ENCODE measurements at regions of chr6 and their contacts with region 1.

Region 1: DNA sequence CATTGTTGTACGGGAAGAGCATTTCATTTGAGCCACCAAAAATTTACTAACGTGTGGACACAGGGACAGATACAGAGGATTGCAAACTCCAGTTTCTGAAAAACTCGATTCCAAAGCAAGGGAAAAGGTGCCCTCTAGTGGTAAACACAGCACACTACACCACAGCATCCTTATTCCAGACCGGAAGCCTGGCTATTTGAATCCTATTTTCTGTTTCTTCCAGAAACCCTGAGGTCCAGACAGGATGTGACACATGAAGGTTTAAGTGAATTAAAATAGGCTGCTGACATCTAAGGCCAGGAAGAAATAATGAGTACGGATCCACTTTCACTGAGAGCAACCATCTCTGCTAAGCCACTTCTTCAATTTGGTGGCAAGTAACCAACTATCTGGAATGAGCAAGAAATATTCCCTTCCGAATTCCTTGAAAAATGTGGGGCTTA is 31.8 kb upstream of the GMPR start:
- DNase-seq: no peak
- ATAC-seq: peak; percentile 57
- H3K4me3 ChIP-seq: no peak overlapping the region
- H3K27ac ChIP-seq: no peak overlapping the region
- H3K4me1 ChIP-seq: peaks cover 16% of the 10 kb centered on the region
- H3K27me3 ChIP-seq: peaks cover 0 to 3% of the 10 kb centered on the region in 2 experiments; a peak in 1 of 4 replicates
- CTCF ChIP-seq: peak; percentile 86 to 95 (median 93)
- EP300 ChIP-seq: no peak
- POLR2A ChIP-seq: no peak
- RAD21 ChIP-seq: peak; percentile 96

Region 2: DNA sequence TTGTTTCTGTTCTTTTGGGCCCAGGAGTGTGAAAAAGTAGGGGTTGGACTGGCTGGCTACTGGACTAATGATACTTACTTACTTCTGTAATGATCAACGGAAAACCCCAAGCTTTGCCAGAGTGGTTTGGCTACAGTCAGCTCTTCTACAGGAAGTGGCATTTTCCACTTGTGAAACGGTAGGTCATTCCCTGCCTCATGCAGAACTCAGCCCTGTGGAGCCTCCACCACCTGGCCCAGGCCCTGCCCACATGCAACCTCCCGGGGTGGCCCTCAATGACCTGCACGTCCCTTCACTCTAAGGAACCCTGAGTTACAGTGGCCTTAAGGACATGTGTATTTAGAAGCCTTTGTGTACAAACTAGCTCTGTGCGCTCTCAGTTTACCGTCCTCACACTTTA is 684.2 kb before region 1 on chr6:
- CTCF ChIA-PET with region 1: interaction called, 5 read pairs
- POLR2A ChIA-PET with region 1: no interaction called
- RAD21 ChIA-PET with region 1: interaction called, 4 read pairs
- SMC1A ChIA-PET with region 1: interaction called, 3 read pairs
- in situ Hi-C with region 1: no loop called
- intact Hi-C with region 1: loop called (anchors 5 kb)
- DNase-seq: no peak
- ATAC-seq: peak; percentile 64
- H3K4me3 ChIP-seq: no peak overlapping the region
- H3K27ac ChIP-seq: no peak overlapping the region
- H3K4me1 ChIP-seq: no peaks in the 10 kb centered on the region
- H3K27me3 ChIP-seq: no peaks in the 10 kb centered on the region
- CTCF ChIP-seq: no peak
- EP300 ChIP-seq: no peak
- POLR2A ChIP-seq: no peak
- RAD21 ChIP-seq: no peak

Region 3: DNA sequence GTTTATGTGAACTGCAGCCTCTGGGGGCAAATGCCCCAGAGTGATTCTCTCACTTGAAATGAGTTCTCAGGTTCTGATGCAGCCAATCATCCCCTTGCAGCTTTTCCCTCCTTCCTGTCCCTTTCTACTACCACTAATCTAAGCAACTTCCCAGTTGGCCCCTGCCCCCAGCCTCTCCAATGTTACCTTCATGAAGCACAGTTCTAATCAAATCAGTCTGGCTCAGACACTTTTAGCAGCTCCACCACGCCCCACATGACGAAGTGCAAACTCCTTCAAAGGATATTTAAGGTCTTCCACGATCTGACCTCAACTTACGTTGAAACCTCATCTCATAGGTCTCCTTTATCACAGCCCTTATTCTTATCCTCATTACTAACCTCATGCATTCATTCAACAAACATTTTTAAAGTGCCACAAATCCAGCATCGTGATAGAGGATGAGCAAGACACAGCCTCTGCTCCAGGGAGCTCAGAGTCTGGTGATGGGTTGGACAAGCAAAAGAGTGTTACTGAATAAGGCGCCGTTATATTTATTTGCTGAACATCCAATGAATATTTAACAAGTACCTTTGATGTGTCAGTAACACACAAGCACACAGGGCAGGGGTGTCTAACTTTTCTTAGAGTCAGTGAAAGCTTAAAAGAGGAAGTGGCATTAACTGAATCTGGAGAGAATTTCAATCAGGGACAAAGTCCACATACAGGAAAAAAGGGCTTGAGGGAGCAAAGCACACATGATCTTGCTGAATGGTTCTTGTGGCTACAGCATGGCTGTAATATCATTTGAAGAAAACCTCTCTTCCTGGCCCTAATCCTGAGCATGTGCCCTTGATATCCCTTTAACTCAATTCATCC is 523.4 kb before region 1 on chr6:
- CTCF ChIA-PET with region 1: interaction called, 13 read pairs
- POLR2A ChIA-PET with region 1: interaction called, 4 read pairs
- RAD21 ChIA-PET with region 1: interaction called, 10 read pairs
- SMC1A ChIA-PET with region 1: interaction called, 17 read pairs
- in situ Hi-C with region 1: no loop called
- intact Hi-C with region 1: no loop called
- DNase-seq: peak; percentile 40
- ATAC-seq: peak; percentile 93
- H3K4me3 ChIP-seq: no peak overlapping the region
- H3K27ac ChIP-seq: no peak overlapping the region
- H3K4me1 ChIP-seq: 0 out of 2 replicates have a peak, but pooled peaks cover 3% of the 10 kb centered on the region
- H3K27me3 ChIP-seq: 0 out of 4 replicates have a peak, but pooled peaks cover 0 to 3% of the 10 kb centered on the region in 2 experiments
- CTCF ChIP-seq: no peak
- EP300 ChIP-seq: peak; percentile 57 to 68; a peak in 3 of 4 replicates
- POLR2A ChIP-seq: no peak
- RAD21 ChIP-seq: no peak

Region 4: GRCh38 chr6:16168858-16169257 is 37.8 kb before region 1 on chr6:
- CTCF ChIA-PET with region 1: interaction called, 10 read pairs
- POLR2A ChIA-PET with region 1: interaction called, 4 read pairs
- RAD21 ChIA-PET with region 1: interaction called, 6 read pairs
- SMC1A ChIA-PET with region 1: interaction called, 15 read pairs
- in situ Hi-C with region 1: no loop called
- intact Hi-C with region 1: no loop called
- DNase-seq: peak; percentile 32
- ATAC-seq: peak; percentile 86
- H3K4me3 ChIP-seq: no peak overlapping the region
- H3K27ac ChIP-seq: no peak overlapping the region
- H3K4me1 ChIP-seq: peaks cover 13% of the 10 kb centered on the region
- H3K27me3 ChIP-seq: no peaks in the 10 kb centered on the region
- CTCF ChIP-seq: peak; percentile 56 to 66 (median 65)
- EP300 ChIP-seq: no peak
- POLR2A ChIP-seq: no peak
- RAD21 ChIP-seq: peak; percentile 87

Region 5: DNA sequence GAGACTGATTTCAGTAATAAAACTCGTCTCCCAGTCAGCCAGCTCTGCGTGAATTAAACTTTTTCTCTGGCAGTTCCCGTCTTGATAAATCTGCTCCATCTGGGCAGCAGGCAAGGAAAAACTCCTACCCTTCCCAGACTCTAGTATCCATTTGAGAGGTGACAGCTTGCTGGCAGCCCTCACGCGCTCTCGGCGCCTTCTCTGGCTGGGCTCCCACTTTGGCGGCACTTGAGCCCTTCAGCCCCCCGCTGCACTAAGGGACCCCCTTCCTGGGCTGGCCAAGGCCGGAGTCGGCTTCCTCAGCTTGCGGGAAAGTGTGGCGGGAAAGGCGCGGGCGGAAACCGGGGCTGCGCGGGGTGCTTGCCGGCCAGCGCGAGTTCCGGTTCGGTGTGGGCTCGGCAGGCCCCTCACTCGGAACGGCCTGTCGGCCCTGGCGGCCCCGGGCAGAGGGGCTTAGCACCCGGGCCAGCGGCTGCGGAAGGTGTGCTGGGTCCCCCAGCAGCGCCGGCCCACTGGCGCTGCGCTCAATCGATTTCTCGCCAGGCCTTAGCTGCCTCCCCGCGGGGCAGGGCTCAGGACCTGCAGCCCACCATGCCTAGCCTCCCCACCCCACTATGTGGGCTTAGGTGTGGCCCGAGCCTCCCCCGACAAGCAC is 10.0 kb after region 1 on chr6:
- CTCF ChIA-PET with region 1: interaction called, 14 read pairs
- POLR2A ChIA-PET with region 1: no interaction called
- RAD21 ChIA-PET with region 1: interaction called, 3 read pairs
- SMC1A ChIA-PET with region 1: interaction called, 5 read pairs
- in situ Hi-C with region 1: no loop called
- intact Hi-C with region 1: no loop called
- DNase-seq: no peak
- ATAC-seq: no peak
- H3K4me3 ChIP-seq: no peak overlapping the region
- H3K27ac ChIP-seq: no peak overlapping the region
- H3K4me1 ChIP-seq: peaks cover 5% of the 10 kb centered on the region
- H3K27me3 ChIP-seq: no peaks in the 10 kb centered on the region; a peak in 1 of 4 replicates
- CTCF ChIP-seq: no peak
- EP300 ChIP-seq: no peak
- POLR2A ChIP-seq: no peak
- RAD21 ChIP-seq: no peak

Measured in GM12878 (cell line).